ENCODE measurements at regions of chr17 and their contacts with region 1.

Region 1: GRCh38 chr17:38428112-38428642 is at the start of gene ARHGAP23:
- DNase-seq: no peak
- H3K4me3 ChIP-seq: peak within 1 kb of the TSS; percentile 78 to 98 (median 84)
- H3K27ac ChIP-seq: peak within 1 kb of the TSS; percentile 91 to 95 (median 93)
- H3K4me1 ChIP-seq: peaks cover 75 to 98% (median 82%) of the 10 kb centered on the region in 4 donors
- H3K27me3 ChIP-seq: no peaks in the 10 kb centered on the region
- CTCF ChIP-seq: no peak
- EP300 ChIP-seq: no peak
- POLR2A ChIP-seq: peak; percentile 39
- total RNA-seq, gene ARHGAP23: 58.6 to 150 (median 104) TPM

Region 2: DNA sequence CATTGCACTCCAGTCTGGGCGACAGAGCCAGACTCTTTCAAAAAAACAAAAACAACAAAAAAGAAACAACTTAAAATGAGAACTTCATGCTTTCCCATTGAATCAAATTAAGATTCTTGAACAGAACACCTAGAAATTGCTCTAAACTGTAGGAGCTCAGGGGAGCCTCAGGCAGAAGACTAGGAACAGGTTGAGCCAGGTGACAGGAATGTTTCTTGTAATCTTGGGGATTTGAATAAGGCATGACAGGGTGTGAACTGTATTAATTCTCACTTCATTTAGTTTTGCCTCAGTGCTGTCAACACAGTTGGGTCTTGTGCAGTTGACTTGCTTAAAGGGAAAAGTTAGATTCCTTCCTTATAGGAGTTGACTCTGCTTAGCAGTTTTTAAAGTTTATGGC is 48.7 kb before region 1 on chr17:
- intact Hi-C with region 1: no loop called
- DNase-seq: no peak
- H3K4me3 ChIP-seq: no peak overlapping the region
- H3K27ac ChIP-seq: no peak overlapping the region
- H3K4me1 ChIP-seq: no peaks in the 10 kb centered on the region
- H3K27me3 ChIP-seq: no peaks in the 10 kb centered on the region
- CTCF ChIP-seq: no peak
- EP300 ChIP-seq: no peak
- POLR2A ChIP-seq: no peak

Region 3: GRCh38 chr17:38464723-38465390 is 36.7 kb after region 1 on chr17:
- intact Hi-C with region 1: loop called (anchors 5 kb)
- DNase-seq: peak; percentile 95
- H3K4me3 ChIP-seq: peak overlapping the region; percentile 61 to 72 (median 64)
- H3K27ac ChIP-seq: peak overlapping the region; percentile 90 to 97 (median 96)
- H3K4me1 ChIP-seq: peaks cover 67 to 74% (median 71%) of the 10 kb centered on the region in 4 donors
- H3K27me3 ChIP-seq: no peaks in the 10 kb centered on the region
- CTCF ChIP-seq: no peak
- EP300 ChIP-seq: no peak
- POLR2A ChIP-seq: peak; percentile 39

Region 4: GRCh38 chr17:38510424-38511080 is 82.4 kb after region 1 on chr17:
- intact Hi-C with region 1: no loop called
- DNase-seq: no peak
- H3K4me3 ChIP-seq: peak overlapping the region; percentile 31 to 40 (median 36)
- H3K27ac ChIP-seq: no peak overlapping the region
- H3K4me1 ChIP-seq: peaks cover 11 to 38% (median 33%) of the 10 kb centered on the region in 4 donors
- H3K27me3 ChIP-seq: peaks cover 0 to 14% (median 0%) of the 10 kb centered on the region in 4 donors
- CTCF ChIP-seq: peak in 2 of 3 experiments; percentile 10 to 21
- EP300 ChIP-seq: no peak
- POLR2A ChIP-seq: no peak